CD4-positive, alpha-beta memory T cell (primary cell): ENCODE measurements at regions of chr11 and their contacts with region 1.

Region 1: GRCh38 chr11:64185816-64186498 is at the start of gene STIP1:
- DNase-seq: peak; percentile 99 to 100 (median 99)
- H3K4me3 ChIP-seq: peak within 1 kb of the TSS; percentile 64 to 71
- H3K4me3 Mint-ChIP-seq: peak within 1 kb of the TSS; percentile 95 to 99 (median 97)
- H3K27ac ChIP-seq: peak within 1 kb of the TSS; percentile 79
- H3K27ac Mint-ChIP-seq: peak within 1 kb of the TSS; percentile 91 to 98 (median 97)
- H3K4me1 ChIP-seq: peaks cover 29% of the 10 kb centered on the region
- H3K4me1 Mint-ChIP-seq: peaks cover 11 to 52% (median 33%) of the 10 kb centered on the region in 4 donors
- H3K27me3 ChIP-seq: no peaks in the 10 kb centered on the region
- H3K27me3 Mint-ChIP-seq: no peaks in the 10 kb centered on the region
- total RNA-seq, gene STIP1: 97.4 to 106 TPM

Region 2: DNA sequence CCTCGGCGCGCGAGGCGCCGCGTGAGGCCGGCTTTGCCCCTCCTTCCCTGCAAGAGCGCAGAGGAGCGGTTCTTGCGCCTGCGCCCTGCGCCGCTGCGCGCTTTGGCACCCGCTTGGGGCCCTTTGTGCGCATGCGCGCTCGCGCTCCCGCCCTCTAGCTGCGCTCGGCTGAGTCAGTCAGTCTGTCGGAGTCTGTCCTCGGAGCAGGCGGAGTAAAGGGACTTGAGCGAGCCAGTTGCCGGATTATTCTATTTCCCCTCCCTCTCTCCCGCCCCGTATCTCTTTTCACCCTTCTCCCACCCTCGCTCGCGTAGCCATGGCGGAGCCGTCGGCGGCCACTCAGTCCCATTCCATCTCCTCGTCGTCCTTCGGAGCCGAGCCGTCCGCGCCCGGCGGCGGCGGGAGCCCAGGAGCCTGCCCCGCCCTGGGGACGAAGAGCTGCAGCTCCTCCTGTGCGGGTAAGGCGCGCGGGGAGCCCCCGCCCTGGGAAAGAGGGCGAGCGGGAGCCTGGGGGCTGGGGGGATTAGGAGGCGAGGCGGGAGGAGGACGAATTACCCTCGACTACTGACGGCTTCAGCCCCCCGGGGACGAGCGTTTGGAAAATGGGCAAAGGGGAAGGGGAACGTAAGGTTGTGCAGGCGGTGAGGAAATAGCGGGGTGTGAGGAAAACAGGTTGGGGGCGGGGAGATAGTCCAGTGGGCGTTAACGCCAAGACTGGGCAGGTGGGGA is 504.5 kb before region 1 on chr11 and contains the start of gene RTN3:
- CTCF ChIA-PET with region 1: no interaction called
- POLR2A ChIA-PET with region 1: no interaction called
- intact Hi-C with region 1: loop called (anchors 5 kb)
- DNase-seq: peak; percentile 98 to 99 (median 98)
- H3K4me3 ChIP-seq: peak within 1 kb of the TSS; percentile 54 to 93
- H3K4me3 Mint-ChIP-seq: peak within 1 kb of the TSS; percentile 89 to 98 (median 92)
- H3K27ac ChIP-seq: peak within 1 kb of the TSS; percentile 86
- H3K27ac Mint-ChIP-seq: peak within 1 kb of the TSS; percentile 71 to 98 (median 91)
- H3K4me1 ChIP-seq: peaks cover 22% of the 10 kb centered on the region
- H3K4me1 Mint-ChIP-seq: peaks cover 18 to 30% (median 24%) of the 10 kb centered on the region in 4 donors
- H3K27me3 ChIP-seq: no peaks in the 10 kb centered on the region
- H3K27me3 Mint-ChIP-seq: peaks cover 0 to 1% of the 10 kb centered on the region in 2 donors
- total RNA-seq, gene RTN3: 41.7 to 41.8 TPM

Region 3: GRCh38 chr11:63986156-63986931 is 199.6 kb before region 1 on chr11 and contains the start of gene OTUB1:
- CTCF ChIA-PET with region 1: no interaction called
- POLR2A ChIA-PET with region 1: interaction called, 5 read pairs
- intact Hi-C with region 1: loop called (anchors 2 kb)
- DNase-seq: peak; percentile 82 to 90 (median 84)
- H3K4me3 ChIP-seq: peak within 1 kb of the TSS; percentile 82 to 96
- H3K4me3 Mint-ChIP-seq: peak within 1 kb of the TSS; percentile 94 to 99 (median 97)
- H3K27ac ChIP-seq: peak within 1 kb of the TSS; percentile 96
- H3K27ac Mint-ChIP-seq: peak within 1 kb of the TSS; percentile 97 to 99 (median 98)
- H3K4me1 ChIP-seq: peaks cover 25% of the 10 kb centered on the region
- H3K4me1 Mint-ChIP-seq: peaks cover 13 to 31% (median 23%) of the 10 kb centered on the region in 4 donors
- H3K27me3 ChIP-seq: no peaks in the 10 kb centered on the region
- H3K27me3 Mint-ChIP-seq: no peaks in the 10 kb centered on the region
- total RNA-seq, gene OTUB1: 72.9 to 73.0 TPM

Region 4: GRCh38 chr11:64196626-64197025 is 10.7 kb after region 1 on chr11:
- CTCF ChIA-PET with region 1: interaction called, 4 read pairs
- POLR2A ChIA-PET with region 1: interaction called, 19 read pairs
- intact Hi-C with region 1: no loop called
- DNase-seq: no peak
- H3K4me3 ChIP-seq: no peak overlapping the region
- H3K4me3 Mint-ChIP-seq: no peak overlapping the region
- H3K27ac ChIP-seq: no peak overlapping the region
- H3K27ac Mint-ChIP-seq: peak overlapping the region in 2 of 7 donors; percentile 68 to 70
- H3K4me1 ChIP-seq: peaks cover 5% of the 10 kb centered on the region
- H3K4me1 Mint-ChIP-seq: peaks cover 6 to 18% (median 10%) of the 10 kb centered on the region in 4 donors
- H3K27me3 ChIP-seq: no peaks in the 10 kb centered on the region
- H3K27me3 Mint-ChIP-seq: no peaks in the 10 kb centered on the region

Region 5: DNA sequence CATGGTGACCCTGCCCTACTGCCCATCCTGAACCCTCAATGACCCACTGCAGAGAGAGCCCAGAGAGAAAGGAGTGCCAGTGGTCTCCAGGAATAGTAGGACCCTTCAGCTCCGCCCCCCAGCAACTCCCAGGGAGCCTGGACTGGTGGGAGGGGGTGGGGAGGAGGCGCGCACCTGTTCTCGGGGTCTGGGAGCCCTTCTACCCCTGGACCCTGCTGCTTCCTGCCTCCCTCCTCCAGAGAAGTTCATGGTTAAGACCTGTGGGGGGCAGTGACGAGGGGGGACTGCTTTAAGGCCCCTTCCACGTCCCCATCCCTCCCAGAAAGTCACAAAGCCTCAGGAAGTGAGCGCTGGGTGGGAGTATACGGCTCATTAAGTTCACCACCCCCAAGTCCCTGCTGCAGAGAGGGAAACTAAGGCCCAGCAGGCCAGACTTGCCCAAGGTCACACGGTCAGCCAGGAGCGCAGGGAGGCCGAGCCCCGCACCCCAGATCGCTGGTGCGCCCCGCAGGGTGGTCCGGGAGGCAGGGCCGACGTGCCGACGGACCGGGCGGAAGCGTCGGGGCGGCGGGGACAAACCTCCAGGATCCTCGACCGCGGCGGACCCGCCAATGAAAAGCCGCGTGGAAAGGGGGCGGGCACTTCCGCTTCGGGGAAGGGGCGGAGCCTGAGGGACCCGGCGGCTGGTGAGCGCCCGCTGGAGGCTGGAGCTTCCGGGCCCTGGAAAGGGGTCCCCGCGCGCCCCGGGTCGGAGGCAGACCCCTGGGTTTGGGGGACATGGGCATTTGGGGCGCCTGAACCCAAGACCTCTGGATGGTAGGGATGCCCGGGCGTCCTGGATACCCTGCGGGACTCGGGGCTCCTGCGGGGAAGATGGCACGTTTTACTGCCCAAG is 39.9 kb after region 1 on chr11 and contains the starts of genes NUDT22 and TRPT1:
- CTCF ChIA-PET with region 1: interaction called, 3 read pairs
- POLR2A ChIA-PET with region 1: interaction called, 27 read pairs
- intact Hi-C with region 1: loop called (anchors 1 kb)
- DNase-seq: peak; percentile 82 to 88 (median 85)
- H3K4me3 ChIP-seq: peak within 1 kb of the TSS; percentile 86 to 94
- H3K4me3 Mint-ChIP-seq: peak within 1 kb of the TSS; percentile 89 to 94 (median 92)
- H3K27ac ChIP-seq: peak within 1 kb of the TSS; percentile 77
- H3K27ac Mint-ChIP-seq: peak within 1 kb of the TSS; percentile 88 to 97 (median 93)
- H3K4me1 ChIP-seq: peaks cover 43% of the 10 kb centered on the region
- H3K4me1 Mint-ChIP-seq: peaks cover 13 to 50% (median 28%) of the 10 kb centered on the region in 4 donors
- H3K27me3 ChIP-seq: no peaks in the 10 kb centered on the region
- H3K27me3 Mint-ChIP-seq: no peaks in the 10 kb centered on the region
- total RNA-seq, gene NUDT22: 83.9 to 101 TPM
- total RNA-seq, gene TRPT1: 37.6 to 42.1 TPM

Region 6: GRCh38 chr11:64246871-64247728 is 61.1 kb after region 1 on chr11 and contains the start of gene PPP1R14B:
- CTCF ChIA-PET with region 1: interaction called, 3 read pairs
- POLR2A ChIA-PET with region 1: interaction called, 14 read pairs
- intact Hi-C with region 1: no loop called
- DNase-seq: peak; percentile 72 to 82 (median 74)
- H3K4me3 ChIP-seq: peak within 1 kb of the TSS; percentile 95 to 98
- H3K4me3 Mint-ChIP-seq: peak within 1 kb of the TSS; percentile 83 to 92 (median 88)
- H3K27ac ChIP-seq: peak within 1 kb of the TSS; percentile 63
- H3K27ac Mint-ChIP-seq: peak within 1 kb of the TSS; percentile 77 to 94 (median 92)
- H3K4me1 ChIP-seq: peaks cover 55% of the 10 kb centered on the region
- H3K4me1 Mint-ChIP-seq: peaks cover 10 to 70% (median 32%) of the 10 kb centered on the region in 4 donors
- H3K27me3 ChIP-seq: no peaks in the 10 kb centered on the region
- H3K27me3 Mint-ChIP-seq: no peaks in the 10 kb centered on the region
- total RNA-seq, gene PPP1R14B: 32.2 to 38.4 TPM

Region 7: DNA sequence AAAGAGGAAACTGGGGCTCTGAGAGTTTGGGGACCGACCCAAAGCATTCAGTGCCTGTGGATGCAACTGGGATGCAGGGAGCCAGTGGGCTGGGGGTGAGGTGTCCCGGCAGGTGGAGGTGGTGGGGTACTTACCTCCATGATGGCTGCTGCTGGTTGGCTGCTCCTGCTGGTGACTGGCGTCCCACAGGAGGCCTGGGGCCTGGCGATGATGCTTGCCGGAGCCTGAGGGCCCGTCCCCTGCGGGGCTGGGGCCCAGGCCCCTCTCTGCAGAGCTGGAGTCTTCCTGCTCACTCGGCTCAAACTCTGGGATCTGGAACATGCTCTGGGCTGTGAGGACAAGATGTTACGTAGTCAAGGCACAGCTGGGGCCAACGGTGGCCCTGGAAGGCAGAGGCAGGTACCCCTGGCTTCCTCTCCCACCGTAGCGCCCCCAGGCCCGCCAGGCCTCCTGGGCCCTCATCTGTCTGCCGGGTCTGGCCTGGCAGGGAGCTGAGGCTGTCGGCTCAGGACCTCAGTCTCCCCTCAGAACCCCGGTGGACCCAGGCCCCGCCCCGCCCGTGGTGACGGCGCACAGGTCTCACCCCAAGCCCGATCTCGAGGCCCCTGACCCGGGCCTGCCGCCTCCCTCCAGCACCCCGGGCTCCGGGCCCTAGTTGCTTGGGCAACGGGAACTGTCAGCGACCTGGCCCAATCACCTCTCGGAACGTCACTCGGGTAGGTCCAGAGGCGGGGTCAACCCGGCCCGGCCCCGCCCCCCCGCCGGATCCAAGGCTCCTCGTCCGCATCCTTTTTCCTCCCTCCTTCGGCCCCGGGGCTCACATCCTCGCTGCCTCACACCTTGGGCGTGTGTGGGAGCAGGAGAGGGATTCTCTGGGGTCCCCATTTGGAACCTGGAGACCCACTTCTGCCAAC is 98.3 kb after region 1 on chr11 and contains the start of gene BAD:
- CTCF ChIA-PET with region 1: no interaction called
- POLR2A ChIA-PET with region 1: interaction called, 19 read pairs
- intact Hi-C with region 1: loop called (anchors 1 kb)
- DNase-seq: peak; percentile 89 to 94 (median 90)
- H3K4me3 ChIP-seq: peak within 1 kb of the TSS; percentile 93 to 96
- H3K4me3 Mint-ChIP-seq: peak within 1 kb of the TSS; percentile 90 to 93 (median 92)
- H3K27ac ChIP-seq: peak within 1 kb of the TSS; percentile 100
- H3K27ac Mint-ChIP-seq: peak within 1 kb of the TSS; percentile 96 to 99 (median 98)
- H3K4me1 ChIP-seq: peaks cover 24% of the 10 kb centered on the region
- H3K4me1 Mint-ChIP-seq: peaks cover 12 to 48% (median 23%) of the 10 kb centered on the region in 4 donors
- H3K27me3 ChIP-seq: no peaks in the 10 kb centered on the region
- H3K27me3 Mint-ChIP-seq: no peaks in the 10 kb centered on the region
- total RNA-seq, gene BAD: 23.1 to 26.2 TPM

Region 8: GRCh38 chr11:64359712-64360445 is 173.9 kb after region 1 on chr11:
- CTCF ChIA-PET with region 1: no interaction called
- POLR2A ChIA-PET with region 1: no interaction called
- intact Hi-C with region 1: no loop called
- DNase-seq: peak in 3 of 5 donors; percentile 25 to 35 (median 33)
- H3K4me3 ChIP-seq: peak overlapping the region; percentile 39 to 53
- H3K4me3 Mint-ChIP-seq: peak overlapping the region; percentile 89 to 96 (median 94)
- H3K27ac ChIP-seq: peak overlapping the region; percentile 62
- H3K27ac Mint-ChIP-seq: peak overlapping the region; percentile 65 to 95 (median 80)
- H3K4me1 ChIP-seq: peaks cover 30% of the 10 kb centered on the region
- H3K4me1 Mint-ChIP-seq: peaks cover 17 to 45% (median 23%) of the 10 kb centered on the region in 4 donors
- H3K27me3 ChIP-seq: no peaks in the 10 kb centered on the region
- H3K27me3 Mint-ChIP-seq: no peaks in the 10 kb centered on the region